IMR-90 (cell line): ENCODE measurements at regions of chr1 and their contacts with region 1.

Region 1: DNA sequence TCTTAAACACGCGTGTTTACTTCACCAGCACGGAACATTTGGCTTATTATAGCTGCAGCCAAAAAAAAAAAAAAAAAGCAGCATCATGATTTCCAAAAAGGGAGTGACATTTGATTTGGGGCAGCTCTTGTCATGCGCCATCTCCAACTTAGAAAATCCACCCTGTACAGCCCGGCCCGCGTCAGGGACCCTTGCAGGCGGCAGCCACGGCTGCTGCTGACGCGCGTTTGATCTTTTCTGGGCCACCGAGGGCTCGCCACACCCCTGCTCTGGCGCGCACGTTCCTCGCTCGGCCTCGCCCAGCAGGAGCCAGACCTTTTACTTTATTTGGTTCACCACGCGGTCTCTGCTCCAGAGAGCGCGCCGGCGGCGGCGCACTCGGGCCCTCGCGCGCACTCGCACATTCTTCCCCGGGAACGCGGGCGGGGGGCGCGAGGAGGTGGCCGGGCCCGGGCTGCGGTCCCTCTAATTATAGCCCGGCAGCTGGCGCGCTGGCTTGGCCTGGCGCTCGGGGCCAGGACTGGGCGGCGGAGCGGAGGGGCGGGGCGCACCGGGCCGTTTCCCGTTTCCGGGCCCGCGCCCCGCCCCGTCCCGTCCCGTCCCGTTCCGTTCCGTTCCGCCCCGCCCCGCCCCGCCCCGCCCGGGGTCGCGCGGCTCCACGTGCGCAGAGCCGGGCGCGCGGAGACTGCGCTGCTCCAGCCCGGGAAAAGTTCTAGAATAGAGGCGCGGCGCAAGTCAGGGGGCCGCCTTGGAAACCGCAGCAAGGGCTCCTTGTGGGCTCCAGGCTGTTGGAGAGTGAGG is 10.2 kb downstream of the IRF2BP2 start:
- DNase-seq: peak; percentile 82
- ATAC-seq: peak; percentile 89
- H3K4me3 ChIP-seq: peak overlapping the region; percentile 51
- H3K27ac ChIP-seq: peak overlapping the region; percentile 83
- H3K4me1 ChIP-seq: peaks cover 9% of the 10 kb centered on the region
- H3K27me3 ChIP-seq: no peaks in the 10 kb centered on the region
- CTCF ChIP-seq: no peak
- POLR2A ChIP-seq: peak; percentile 39
- RAD21 ChIP-seq: no peak

Region 2: GRCh38 chr1:234533975-234534876 is 65.6 kb before region 1 on chr1:
- CTCF ChIA-PET with region 1: interaction called, 3 read pairs
- POLR2A ChIA-PET with region 1: no interaction called
- dilution Hi-C with region 1: no loop called
- in situ Hi-C with region 1: no loop called
- intact Hi-C with region 1: loop called (anchors 5 kb)
- DNase-seq: peak; percentile 98
- ATAC-seq: peak; percentile 40
- H3K4me3 ChIP-seq: no peak overlapping the region
- H3K27ac ChIP-seq: peak overlapping the region; percentile 74
- H3K4me1 ChIP-seq: peaks cover 36% of the 10 kb centered on the region
- H3K27me3 ChIP-seq: no peaks in the 10 kb centered on the region; the same call in 1 of the 2 replicates
- CTCF ChIP-seq: no peak
- POLR2A ChIP-seq: no peak
- RAD21 ChIP-seq: no peak

Region 3: DNA sequence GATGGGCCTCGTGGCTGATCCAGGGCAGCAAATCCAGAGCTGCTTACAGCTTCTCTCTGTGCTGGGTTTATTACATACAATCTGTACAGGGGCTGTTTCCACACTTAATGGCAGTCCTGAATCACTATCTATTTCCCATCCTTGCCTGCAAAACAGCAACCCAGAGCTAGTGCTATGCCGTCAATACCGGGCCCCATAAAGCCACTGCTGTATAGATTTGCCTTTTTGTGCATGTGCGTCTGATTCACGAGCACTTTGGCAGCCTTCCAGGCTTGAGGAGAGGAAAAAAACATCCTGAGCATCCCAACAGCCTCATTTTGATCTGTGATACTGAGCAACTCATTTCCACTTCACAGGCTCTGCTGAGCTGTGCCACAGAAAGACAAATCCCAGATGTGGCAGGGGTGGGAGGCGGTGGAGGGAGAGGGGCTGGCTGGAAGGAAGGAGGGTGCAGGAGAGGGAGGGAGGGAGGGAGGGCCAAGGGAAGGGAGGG is 55.7 kb before region 1 on chr1:
- CTCF ChIA-PET with region 1: interaction called, 3 read pairs
- POLR2A ChIA-PET with region 1: interaction called, 6 read pairs
- dilution Hi-C with region 1: no loop called
- in situ Hi-C with region 1: loop called (anchors 5 kb)
- intact Hi-C with region 1: no loop called
- DNase-seq: peak; percentile 98
- ATAC-seq: peak; percentile 86
- H3K4me3 ChIP-seq: no peak overlapping the region
- H3K27ac ChIP-seq: peak overlapping the region; percentile 72; the same call in 1 of the 2 replicates
- H3K4me1 ChIP-seq: peaks cover 19% of the 10 kb centered on the region
- H3K27me3 ChIP-seq: no peaks in the 10 kb centered on the region
- CTCF ChIP-seq: no peak
- POLR2A ChIP-seq: no peak
- RAD21 ChIP-seq: no peak; the same call in 1 of the 2 replicates

Region 4: DNA sequence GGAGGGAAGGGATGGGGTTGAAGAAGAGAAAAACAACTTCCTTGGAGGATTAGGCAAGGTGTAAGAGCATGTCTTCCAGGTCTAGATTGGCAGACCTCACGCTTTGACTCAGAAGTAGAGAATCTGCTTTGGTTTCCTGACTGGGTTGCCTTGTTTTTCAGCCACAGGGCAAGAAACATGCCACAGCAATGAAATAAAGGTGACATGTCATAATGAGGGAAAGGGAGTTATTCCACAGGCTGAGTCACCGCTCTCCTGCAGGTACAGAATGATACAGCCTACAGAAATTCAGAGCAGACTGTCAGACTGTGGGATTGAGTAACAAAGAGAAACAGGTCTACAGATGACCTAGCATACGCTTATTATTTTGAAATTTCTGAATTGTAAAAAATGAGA is 35.2 kb before region 1 on chr1:
- CTCF ChIA-PET with region 1: no interaction called
- POLR2A ChIA-PET with region 1: no interaction called
- dilution Hi-C with region 1: no loop called
- in situ Hi-C with region 1: no loop called
- intact Hi-C with region 1: no loop called
- DNase-seq: peak; percentile 88
- ATAC-seq: peak; percentile 69
- H3K4me3 ChIP-seq: no peak overlapping the region
- H3K27ac ChIP-seq: no peak overlapping the region
- H3K4me1 ChIP-seq: peaks cover 6% of the 10 kb centered on the region; the same call in 1 of the 2 replicates
- H3K27me3 ChIP-seq: no peaks in the 10 kb centered on the region
- CTCF ChIP-seq: no peak
- POLR2A ChIP-seq: no peak
- RAD21 ChIP-seq: no peak